B cell (primary cell): ENCODE measurements at regions of chr19 and their contacts with region 1.

Region 1: DNA sequence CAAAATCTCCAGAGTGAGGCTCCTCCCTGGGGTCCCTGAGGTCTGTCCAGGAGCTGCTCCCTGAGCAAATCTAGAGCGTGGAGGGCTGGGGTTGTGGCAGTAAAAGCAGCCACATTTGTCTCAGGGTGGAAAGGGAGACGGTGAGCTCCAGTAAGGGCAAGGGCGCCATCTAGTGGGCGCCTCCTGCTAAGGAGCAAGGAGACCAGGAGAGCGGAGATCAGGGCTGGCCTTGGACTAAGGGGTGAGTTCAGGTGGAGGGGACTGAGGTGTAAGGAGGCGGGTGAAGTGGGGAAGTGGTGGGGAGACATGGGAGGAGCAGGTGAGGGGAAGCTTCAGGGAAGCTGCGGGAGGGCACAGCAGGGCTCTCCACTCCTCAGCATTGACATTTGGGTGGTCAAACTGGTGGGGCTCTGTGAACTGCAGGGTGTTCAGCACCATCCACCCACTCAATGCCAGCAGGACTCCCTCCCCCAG is 5.3 kb upstream of the CEACAM21 start:
- DNase-seq: peak; percentile 88
- ATAC-seq: peak; percentile 98
- H3K4me3 ChIP-seq: no peak overlapping the region
- H3K4me3 Mint-ChIP-seq: no peak overlapping the region
- H3K27ac ChIP-seq: no peak overlapping the region
- H3K27ac Mint-ChIP-seq: no peak overlapping the region
- H3K4me1 ChIP-seq: peaks cover 9 to 12% of the 10 kb centered on the region in 2 donors
- H3K4me1 Mint-ChIP-seq: peaks cover 11% of the 10 kb centered on the region
- H3K27me3 ChIP-seq: no peaks in the 10 kb centered on the region
- H3K27me3 Mint-ChIP-seq: peaks cover under 1% of the 10 kb centered on the region
- CTCF ChIP-seq: peak; percentile 91

Region 2: GRCh38 chr19:41439441-41440222 is 131.0 kb before region 1 on chr19 and contains the start of gene DMAC2:
- CTCF ChIA-PET with region 1: interaction called, 442 read pairs
- POLR2A ChIA-PET with region 1: interaction called, 5 read pairs
- intact Hi-C with region 1: no loop called
- DNase-seq: peak; percentile 94
- ATAC-seq: peak; percentile 98
- H3K4me3 ChIP-seq: peak within 1 kb of the TSS; percentile 61 to 97 (median 81)
- H3K4me3 Mint-ChIP-seq: peak within 1 kb of the TSS; percentile 45
- H3K27ac ChIP-seq: peak within 1 kb of the TSS; percentile 51 to 80
- H3K27ac Mint-ChIP-seq: peak within 1 kb of the TSS; percentile 50
- H3K4me1 ChIP-seq: peaks cover 8 to 14% of the 10 kb centered on the region in 2 donors
- H3K4me1 Mint-ChIP-seq: peaks cover 15% of the 10 kb centered on the region
- H3K27me3 ChIP-seq: peaks cover 0 to 4% (median 0%) of the 10 kb centered on the region in 4 experiments
- H3K27me3 Mint-ChIP-seq: peaks cover 13% of the 10 kb centered on the region
- CTCF ChIP-seq: peak; percentile 41
- total RNA-seq, gene DMAC2: 31.6 and 31.8 TPM in 2 replicates

Region 3: GRCh38 chr19:41521931-41522555 is 48.6 kb before region 1 on chr19:
- CTCF ChIA-PET with region 1: interaction called, 4 read pairs
- POLR2A ChIA-PET with region 1: interaction called, 5 read pairs
- intact Hi-C with region 1: loop called (anchors 2 kb)
- DNase-seq: peak; percentile 75
- ATAC-seq: peak; percentile 55
- H3K4me3 ChIP-seq: peak overlapping the region; percentile 36 to 57 (median 45)
- H3K4me3 Mint-ChIP-seq: peak overlapping the region; percentile 89
- H3K27ac ChIP-seq: peak overlapping the region; percentile 87 to 88
- H3K27ac Mint-ChIP-seq: peak overlapping the region; percentile 98
- H3K4me1 ChIP-seq: peaks cover 22 to 27% of the 10 kb centered on the region in 2 donors
- H3K4me1 Mint-ChIP-seq: peaks cover 38% of the 10 kb centered on the region
- H3K27me3 ChIP-seq: no peaks in the 10 kb centered on the region
- H3K27me3 Mint-ChIP-seq: no peaks in the 10 kb centered on the region
- CTCF ChIP-seq: no peak

Region 4: GRCh38 chr19:41531438-41532311 is 39.0 kb before region 1 on chr19:
- CTCF ChIA-PET with region 1: interaction called, 549 read pairs
- POLR2A ChIA-PET with region 1: interaction called, 5 read pairs
- intact Hi-C with region 1: no loop called
- DNase-seq: peak; percentile 92
- ATAC-seq: peak; percentile 79
- H3K4me3 ChIP-seq: peak overlapping the region; percentile 37 to 67 (median 52)
- H3K4me3 Mint-ChIP-seq: peak overlapping the region; percentile 80
- H3K27ac ChIP-seq: peak overlapping the region; percentile 72 to 83
- H3K27ac Mint-ChIP-seq: peak overlapping the region; percentile 88
- H3K4me1 ChIP-seq: peaks cover 64 to 78% of the 10 kb centered on the region in 2 donors
- H3K4me1 Mint-ChIP-seq: peaks cover 83% of the 10 kb centered on the region
- H3K27me3 ChIP-seq: no peaks in the 10 kb centered on the region
- H3K27me3 Mint-ChIP-seq: no peaks in the 10 kb centered on the region
- CTCF ChIP-seq: no peak

Region 5: GRCh38 chr19:41541990-41542584 is 28.6 kb before region 1 on chr19:
- CTCF ChIA-PET with region 1: interaction called, 549 read pairs
- POLR2A ChIA-PET with region 1: interaction called, 6 read pairs
- intact Hi-C with region 1: no loop called
- DNase-seq: peak; percentile 84
- ATAC-seq: peak; percentile 28
- H3K4me3 ChIP-seq: peak overlapping the region in 1 of 5 experiments; percentile 11
- H3K4me3 Mint-ChIP-seq: peak overlapping the region; percentile 66
- H3K27ac ChIP-seq: no peak overlapping the region
- H3K27ac Mint-ChIP-seq: peak overlapping the region; percentile 54
- H3K4me1 ChIP-seq: peaks cover 43 to 45% of the 10 kb centered on the region in 2 donors
- H3K4me1 Mint-ChIP-seq: peaks cover 55% of the 10 kb centered on the region
- H3K27me3 ChIP-seq: no peaks in the 10 kb centered on the region
- H3K27me3 Mint-ChIP-seq: no peaks in the 10 kb centered on the region
- CTCF ChIP-seq: peak; percentile 88

Region 6: GRCh38 chr19:41657157-41657556 is 86.5 kb after region 1 on chr19:
- CTCF ChIA-PET with region 1: no interaction called
- POLR2A ChIA-PET with region 1: no interaction called
- intact Hi-C with region 1: no loop called
- DNase-seq: no peak
- ATAC-seq: no peak
- H3K4me3 ChIP-seq: no peak overlapping the region
- H3K4me3 Mint-ChIP-seq: no peak overlapping the region
- H3K27ac ChIP-seq: no peak overlapping the region
- H3K27ac Mint-ChIP-seq: no peak overlapping the region
- H3K4me1 ChIP-seq: no peaks in the 10 kb centered on the region
- H3K4me1 Mint-ChIP-seq: no peaks in the 10 kb centered on the region
- H3K27me3 ChIP-seq: peaks cover 0 to 11% (median 5%) of the 10 kb centered on the region in 4 experiments
- H3K27me3 Mint-ChIP-seq: peaks cover 73% of the 10 kb centered on the region
- CTCF ChIP-seq: no peak